HepG2 (cell line): ENCODE measurements at regions of chr3 and their contacts with region 1.

Region 1: DNA sequence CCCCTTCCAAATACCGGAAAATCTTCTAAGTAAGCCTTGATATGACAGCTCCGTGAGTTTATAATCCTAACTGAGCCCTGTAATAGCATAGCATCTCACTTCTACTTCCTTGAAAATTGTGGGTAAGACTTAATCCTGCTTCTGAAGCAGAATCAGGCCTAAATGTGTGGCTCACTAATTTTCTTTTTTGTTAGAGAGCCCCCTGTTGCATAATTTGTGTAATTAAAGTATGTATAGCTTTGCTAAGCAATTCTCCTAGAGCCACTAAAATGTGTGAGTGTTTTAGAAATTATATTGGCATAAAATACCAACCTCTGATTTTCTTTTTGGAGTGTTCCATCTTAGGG is 304.4 kb downstream of the FGF12 start:
- DNase-seq: no peak
- ATAC-seq: peak; percentile 43; the same call in 1 of the 3 replicates
- H3K4me3 ChIP-seq: no peak overlapping the region
- H3K27ac ChIP-seq: no peak overlapping the region
- H3K4me1 ChIP-seq: no peaks in the 10 kb centered on the region
- H3K27me3 ChIP-seq: no peaks in the 10 kb centered on the region
- CTCF ChIP-seq: peak; percentile 34
- EP300 ChIP-seq: no peak
- POLR2A ChIP-seq: no peak
- RAD21 ChIP-seq: no peak

Region 2: GRCh38 chr3:192188218-192188835 is 234.6 kb before region 1 on chr3:
- CTCF ChIA-PET with region 1: interaction called, 5 read pairs
- POLR2A ChIA-PET with region 1: no interaction called
- in situ Hi-C with region 1: no loop called
- intact Hi-C with region 1: loop called (anchors 1 kb)
- DNase-seq: peak; percentile 33
- ATAC-seq: peak; percentile 89
- H3K4me3 ChIP-seq: no peak overlapping the region
- H3K27ac ChIP-seq: no peak overlapping the region
- H3K4me1 ChIP-seq: no peaks in the 10 kb centered on the region
- H3K27me3 ChIP-seq: no peaks in the 10 kb centered on the region; a peak in 1 of 5 replicates
- CTCF ChIP-seq: peak; percentile 74
- EP300 ChIP-seq: no peak
- POLR2A ChIP-seq: no peak
- RAD21 ChIP-seq: no peak